Activated CD4-positive, alpha-beta memory T cell treated with anti-CD3 and anti-CD28 coated beads for 36 hours (primary cell): ENCODE measurements at regions of chr19 and their contacts with region 1.

Region 1: GRCh38 chr19:13861732-13862531 is 15.0 kb upstream of the NANOS3 start:
- DNase-seq: peak; percentile 94
- H3K4me3 Mint-ChIP-seq: peak overlapping the region; percentile 97
- H3K27ac Mint-ChIP-seq: peak overlapping the region; percentile 99
- H3K4me1 Mint-ChIP-seq: peaks cover 38% of the 10 kb centered on the region
- H3K27me3 Mint-ChIP-seq: peaks cover 21% of the 10 kb centered on the region

Region 2: DNA sequence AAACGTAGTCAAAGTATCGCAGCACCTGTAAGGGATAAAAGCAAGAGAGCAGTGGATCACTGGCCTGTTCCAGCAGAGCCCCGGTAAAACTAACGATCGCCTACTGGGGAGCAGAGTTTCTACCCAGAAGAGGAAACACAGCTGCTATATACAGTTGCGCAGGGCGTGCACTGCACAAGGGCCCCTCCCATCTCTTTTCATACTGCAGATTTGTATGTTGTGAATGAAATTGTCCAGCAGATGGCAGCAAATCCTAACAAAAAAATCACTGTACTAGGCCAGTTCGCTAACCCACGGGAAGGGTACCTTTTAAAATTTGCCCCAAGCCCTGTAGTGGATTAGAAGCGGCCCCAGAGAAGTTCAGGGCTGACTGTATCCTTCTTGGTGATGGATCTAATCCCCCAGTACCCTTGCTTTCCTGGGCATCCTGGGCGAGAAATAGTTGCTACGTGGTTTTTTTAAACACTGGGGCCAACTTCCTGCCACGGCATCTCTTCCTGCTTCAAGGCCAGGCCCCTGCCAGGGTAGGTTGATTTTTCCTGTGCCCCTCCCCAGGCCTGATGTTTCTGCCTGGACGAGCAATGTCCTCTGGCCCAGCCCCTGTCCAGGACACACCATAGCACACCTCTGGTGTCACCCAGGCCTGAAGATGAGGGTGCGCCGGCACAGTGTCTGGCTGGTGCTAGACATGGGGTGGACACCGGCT is 584.7 kb before region 1 on chr19:
- CTCF ChIA-PET with region 1: interaction called, 5 read pairs
- POLR2A ChIA-PET with region 1: no interaction called
- intact Hi-C with region 1: loop called (anchors 5 kb)
- DNase-seq: peak; percentile 69
- H3K4me3 Mint-ChIP-seq: peak overlapping the region; percentile 41
- H3K27ac Mint-ChIP-seq: peak overlapping the region; percentile 73
- H3K4me1 Mint-ChIP-seq: peaks cover 25% of the 10 kb centered on the region
- H3K27me3 Mint-ChIP-seq: no peaks in the 10 kb centered on the region

Region 3: GRCh38 chr19:13621413-13621812 is 240.5 kb before region 1 on chr19:
- CTCF ChIA-PET with region 1: interaction called, 3 read pairs
- POLR2A ChIA-PET with region 1: no interaction called
- intact Hi-C with region 1: loop called (anchors 10 kb)
- DNase-seq: peak; percentile 82
- H3K4me3 Mint-ChIP-seq: no peak overlapping the region
- H3K27ac Mint-ChIP-seq: no peak overlapping the region
- H3K4me1 Mint-ChIP-seq: no peaks in the 10 kb centered on the region
- H3K27me3 Mint-ChIP-seq: peaks cover 43% of the 10 kb centered on the region

Region 4: GRCh38 chr19:13691569-13692435 is 170.1 kb before region 1 on chr19:
- CTCF ChIA-PET with region 1: no interaction called
- POLR2A ChIA-PET with region 1: no interaction called
- intact Hi-C with region 1: no loop called
- DNase-seq: no peak
- H3K4me3 Mint-ChIP-seq: no peak overlapping the region
- H3K27ac Mint-ChIP-seq: no peak overlapping the region
- H3K4me1 Mint-ChIP-seq: no peaks in the 10 kb centered on the region
- H3K27me3 Mint-ChIP-seq: peaks cover 12% of the 10 kb centered on the region

Region 5: DNA sequence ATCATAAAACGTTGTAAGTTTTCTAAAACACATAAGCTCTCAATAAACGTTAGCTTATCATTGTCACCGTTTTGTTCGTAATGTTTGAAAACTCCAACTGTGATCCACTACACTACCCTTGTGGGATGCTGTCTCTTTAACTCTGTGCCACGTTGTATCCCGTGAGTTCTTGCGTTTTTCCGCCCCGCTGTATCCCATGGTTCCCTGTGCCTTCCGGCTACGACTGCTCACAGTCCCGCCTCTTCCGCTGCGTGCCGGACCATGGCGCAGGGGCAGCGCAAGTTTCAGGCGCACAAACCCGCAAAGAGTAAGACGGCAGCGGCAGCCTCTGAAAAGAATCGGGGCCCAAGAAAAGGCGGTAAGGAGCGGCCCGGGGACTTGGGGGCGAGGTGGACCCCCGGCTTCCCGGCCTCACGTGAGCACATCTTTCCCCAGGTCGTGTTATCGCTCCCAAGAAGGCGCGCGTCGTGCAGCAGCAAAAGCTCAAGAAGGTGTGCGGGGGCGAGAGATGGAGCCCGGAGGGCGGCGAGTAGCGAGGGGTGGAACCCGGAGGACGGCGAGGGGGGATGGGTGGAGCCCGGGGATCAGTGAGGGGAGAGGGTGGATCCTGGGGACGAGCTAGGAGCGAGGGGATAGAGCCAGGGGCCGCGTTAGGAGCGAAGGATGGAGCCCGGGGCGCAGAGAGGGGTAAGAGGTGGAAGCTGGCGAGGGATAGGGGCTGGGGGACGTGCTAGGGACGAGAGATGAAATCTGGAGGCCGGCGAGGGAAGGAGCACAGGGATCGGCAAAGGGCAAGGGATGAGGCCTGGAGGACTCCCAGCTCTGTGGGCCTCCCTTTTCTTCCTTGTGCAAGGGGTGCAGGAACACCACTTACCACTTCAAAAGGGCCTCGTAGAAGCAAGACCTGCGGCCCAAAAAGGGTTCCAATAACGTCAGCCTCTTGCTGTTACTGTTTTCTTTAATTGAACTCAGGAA is 87.4 kb before region 1 on chr19 and contains the start of gene C19orf53:
- CTCF ChIA-PET with region 1: interaction called, 30 read pairs
- POLR2A ChIA-PET with region 1: interaction called, 3 read pairs
- intact Hi-C with region 1: no loop called
- DNase-seq: peak; percentile 93
- H3K4me3 Mint-ChIP-seq: peak within 1 kb of the TSS; percentile 96
- H3K27ac Mint-ChIP-seq: peak within 1 kb of the TSS; percentile 96
- H3K4me1 Mint-ChIP-seq: peaks cover 21% of the 10 kb centered on the region
- H3K27me3 Mint-ChIP-seq: no peaks in the 10 kb centered on the region
- total RNA-seq, gene C19orf53: 124 to 142 TPM

Region 6: GRCh38 chr19:13804830-13805683 is 56.9 kb before region 1 on chr19:
- CTCF ChIA-PET with region 1: interaction called, 10 read pairs
- POLR2A ChIA-PET with region 1: no interaction called
- intact Hi-C with region 1: no loop called
- DNase-seq: no peak
- H3K4me3 Mint-ChIP-seq: no peak overlapping the region
- H3K27ac Mint-ChIP-seq: no peak overlapping the region
- H3K4me1 Mint-ChIP-seq: no peaks in the 10 kb centered on the region
- H3K27me3 Mint-ChIP-seq: no peaks in the 10 kb centered on the region

Region 7: GRCh38 chr19:13846557-13847406 is 15.2 kb before region 1 on chr19:
- CTCF ChIA-PET with region 1: interaction called, 39 read pairs
- POLR2A ChIA-PET with region 1: interaction called, 36 read pairs
- intact Hi-C with region 1: loop called (anchors 1 kb)
- DNase-seq: peak; percentile 98
- H3K4me3 Mint-ChIP-seq: peak overlapping the region; percentile 78
- H3K27ac Mint-ChIP-seq: peak overlapping the region; percentile 97
- H3K4me1 Mint-ChIP-seq: peaks cover 57% of the 10 kb centered on the region
- H3K27me3 Mint-ChIP-seq: no peaks in the 10 kb centered on the region

Region 8: DNA sequence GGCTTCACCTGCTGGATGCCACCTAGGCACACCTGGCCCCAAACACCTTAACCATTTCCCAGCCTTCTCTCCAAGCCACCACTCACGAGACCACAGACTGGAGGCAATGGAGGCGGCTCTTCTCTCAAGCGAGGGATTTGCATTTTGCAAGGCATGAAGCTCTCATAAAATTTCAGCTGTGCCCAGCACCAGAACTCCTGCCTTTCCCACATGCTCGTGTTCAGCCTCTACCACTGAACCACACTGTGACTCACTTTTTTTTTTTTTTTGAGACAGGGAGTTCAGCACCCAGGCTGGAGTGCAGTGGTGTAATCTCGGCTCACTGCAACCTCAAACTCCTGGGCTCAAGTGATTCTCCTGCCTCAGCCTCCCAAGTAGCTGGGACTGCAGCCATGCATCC is 25.6 kb after region 1 on chr19:
- CTCF ChIA-PET with region 1: no interaction called
- POLR2A ChIA-PET with region 1: no interaction called
- intact Hi-C with region 1: no loop called
- DNase-seq: no peak
- H3K4me3 Mint-ChIP-seq: no peak overlapping the region
- H3K27ac Mint-ChIP-seq: no peak overlapping the region
- H3K4me1 Mint-ChIP-seq: peaks cover 4% of the 10 kb centered on the region
- H3K27me3 Mint-ChIP-seq: no peaks in the 10 kb centered on the region